PC-3 (cell line): ENCODE measurements at regions of chr5 and their contacts with region 1.

Region 1: GRCh38 chr5:159178978-159179377 is 30.4 kb downstream of the RNF145 start:
- DNase-seq: peak; percentile 81
- ATAC-seq: peak; percentile 92
- H3K4me3 ChIP-seq: no peak overlapping the region
- H3K27ac ChIP-seq: peak overlapping the region; percentile 98
- H3K4me1 ChIP-seq: peaks cover 47% of the 10 kb centered on the region
- H3K27me3 ChIP-seq: no peaks in the 10 kb centered on the region
- CTCF ChIP-seq: no peak

Region 2: GRCh38 chr5:159189029-159189709 is 10.2 kb after region 1 on chr5:
- CTCF ChIA-PET with region 1: interaction called, 3 read pairs
- POLR2A ChIA-PET with region 1: interaction called, 7 read pairs
- intact Hi-C with region 1: loop called (anchors 1 kb)
- DNase-seq: peak; percentile 53
- ATAC-seq: peak; percentile 56
- H3K4me3 ChIP-seq: no peak overlapping the region
- H3K27ac ChIP-seq: peak overlapping the region; percentile 75
- H3K4me1 ChIP-seq: peaks cover 37% of the 10 kb centered on the region
- H3K27me3 ChIP-seq: no peaks in the 10 kb centered on the region
- CTCF ChIP-seq: no peak

Region 3: GRCh38 chr5:159262859-159263567 is 84.0 kb after region 1 on chr5 and contains the start of gene UBLCP1:
- CTCF ChIA-PET with region 1: no interaction called
- POLR2A ChIA-PET with region 1: no interaction called
- intact Hi-C with region 1: loop called (anchors 5 kb)
- DNase-seq: peak; percentile 75
- ATAC-seq: peak; percentile 91
- H3K4me3 ChIP-seq: peak within 1 kb of the TSS; percentile 95
- H3K27ac ChIP-seq: peak within 1 kb of the TSS; percentile 97
- H3K4me1 ChIP-seq: peaks cover 15% of the 10 kb centered on the region
- H3K27me3 ChIP-seq: no peaks in the 10 kb centered on the region
- CTCF ChIP-seq: no peak
- total RNA-seq, gene UBLCP1: 8.9 and 9.5 TPM in 2 replicates